Common myeloid progenitor, CD34-positive (primary cell): ENCODE measurements at regions of chr22 and their contacts with region 1.

Region 1: GRCh38 chr22:46035742-46036557 is 59.0 kb upstream of the WNT7B start:
- DNase-seq: peak; percentile 98 to 99 (median 99)
- H3K4me3 ChIP-seq: peak overlapping the region; percentile 63 to 90 (median 87)
- H3K27ac ChIP-seq: peak overlapping the region; percentile 58 to 89
- H3K4me1 ChIP-seq: peaks cover 0 to 55% (median 38%) of the 10 kb centered on the region in 4 experiments
- H3K27me3 ChIP-seq: peaks cover 0 to 2% (median 0%) of the 10 kb centered on the region in 5 experiments

Region 2: DNA sequence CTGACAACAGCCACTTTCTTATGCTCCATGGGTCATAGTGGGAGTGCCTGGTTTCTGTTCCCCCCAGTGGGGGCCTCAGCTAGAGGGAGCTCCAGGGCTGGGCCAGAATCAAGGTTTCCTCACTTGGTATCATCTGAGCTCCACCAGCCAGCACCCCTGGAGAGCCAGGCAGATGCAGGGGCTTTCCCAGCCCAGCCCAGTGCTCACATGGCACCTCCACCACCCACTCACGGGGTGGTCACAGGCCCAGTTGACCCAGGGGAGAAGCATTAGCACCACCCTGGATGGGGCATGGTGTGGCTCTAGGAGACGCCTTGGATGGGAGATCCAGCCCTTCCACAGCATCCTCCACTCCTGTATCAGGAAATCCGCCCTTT is 34.9 kb before region 1 on chr22:
- CTCF ChIA-PET with region 1: interaction called, 75 read pairs
- POLR2A ChIA-PET with region 1: interaction called, 7 read pairs
- DNase-seq: peak in 2 of 3 donors; percentile 36 to 38
- H3K4me3 ChIP-seq: no peak overlapping the region
- H3K27ac ChIP-seq: no peak overlapping the region
- H3K4me1 ChIP-seq: peaks cover 0 to 54% (median 41%) of the 10 kb centered on the region in 4 experiments
- H3K27me3 ChIP-seq: no peaks in the 10 kb centered on the region

Region 3: GRCh38 chr22:46019351-46019750 is 16.6 kb before region 1 on chr22:
- CTCF ChIA-PET with region 1: interaction called, 50 read pairs
- POLR2A ChIA-PET with region 1: interaction called, 4 read pairs
- DNase-seq: no peak
- H3K4me3 ChIP-seq: no peak overlapping the region
- H3K27ac ChIP-seq: peak overlapping the region in 1 of 2 experiments; percentile 18
- H3K4me1 ChIP-seq: peaks cover 3 to 9% (median 6%) of the 10 kb centered on the region in 4 experiments
- H3K27me3 ChIP-seq: no peaks in the 10 kb centered on the region

Region 4: GRCh38 chr22:46071451-46072109 is 35.6 kb after region 1 on chr22:
- CTCF ChIA-PET with region 1: interaction called, 7 read pairs
- POLR2A ChIA-PET with region 1: interaction called, 13 read pairs
- DNase-seq: peak; percentile 78 to 92 (median 91)
- H3K4me3 ChIP-seq: peak overlapping the region; percentile 64 to 91 (median 77)
- H3K27ac ChIP-seq: peak overlapping the region; percentile 46 to 78
- H3K4me1 ChIP-seq: peaks cover 3 to 71% (median 36%) of the 10 kb centered on the region in 4 experiments
- H3K27me3 ChIP-seq: peaks cover 0 to 36% (median 0%) of the 10 kb centered on the region in 5 experiments

Region 5: DNA sequence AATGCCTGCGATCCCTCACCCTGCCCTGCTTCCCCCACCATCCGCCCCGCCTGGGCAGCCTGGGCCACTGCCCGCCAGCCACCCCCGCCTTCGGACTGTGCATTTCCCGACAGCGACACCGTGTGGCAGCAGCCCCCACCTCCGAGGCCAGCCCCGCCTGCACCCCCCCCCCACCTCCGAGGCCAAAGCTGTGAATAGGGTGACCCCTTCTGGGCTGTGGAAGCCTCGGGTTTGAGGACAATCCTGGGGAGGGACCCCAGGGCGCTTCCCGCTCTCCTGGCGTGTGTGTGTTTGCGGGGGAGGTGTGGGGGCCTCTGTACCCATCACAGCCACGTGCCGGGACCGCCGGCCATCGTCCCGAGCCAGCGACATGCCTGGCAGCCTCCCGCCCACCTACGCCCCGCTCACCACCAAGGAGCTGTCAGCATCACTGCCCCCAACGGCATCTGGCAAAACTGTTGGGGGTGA is 80.6 kb after region 1 on chr22:
- CTCF ChIA-PET with region 1: interaction called, 10 read pairs
- POLR2A ChIA-PET with region 1: no interaction called
- DNase-seq: peak; percentile 79 to 90 (median 87)
- H3K4me3 ChIP-seq: no peak overlapping the region
- H3K27ac ChIP-seq: no peak overlapping the region
- H3K4me1 ChIP-seq: peaks cover 0 to 22% (median 14%) of the 10 kb centered on the region in 4 experiments
- H3K27me3 ChIP-seq: no peaks in the 10 kb centered on the region

Region 6: GRCh38 chr22:46267431-46268279 is 231.7 kb after region 1 on chr22 and contains the start of gene TTC38:
- CTCF ChIA-PET with region 1: no interaction called
- POLR2A ChIA-PET with region 1: no interaction called
- DNase-seq: peak in 2 of 3 donors; percentile 48 to 74
- H3K4me3 ChIP-seq: peak within 1 kb of the TSS; percentile 59 to 91 (median 75)
- H3K27ac ChIP-seq: peak within 1 kb of the TSS in 1 of 2 experiments; percentile 54
- H3K4me1 ChIP-seq: peaks cover 0 to 15% (median 9%) of the 10 kb centered on the region in 4 experiments
- H3K27me3 ChIP-seq: peaks cover 0 to 16% (median 8%) of the 10 kb centered on the region in 5 experiments